Activated T-helper 2 cell treated with anti-CD3 and anti-CD28 coated beads, Interferon-gamma antibody, Interleukin-2, Interleukin-4, amounts not matched to agents 10 μg/mL and 5 μg/mL and 100 μg/mL, durations not matched to agents 14 hours and 24 hours and 36 hours (primary cell): ENCODE measurements at regions of chr1 and their contacts with region 1.

Region 1: DNA sequence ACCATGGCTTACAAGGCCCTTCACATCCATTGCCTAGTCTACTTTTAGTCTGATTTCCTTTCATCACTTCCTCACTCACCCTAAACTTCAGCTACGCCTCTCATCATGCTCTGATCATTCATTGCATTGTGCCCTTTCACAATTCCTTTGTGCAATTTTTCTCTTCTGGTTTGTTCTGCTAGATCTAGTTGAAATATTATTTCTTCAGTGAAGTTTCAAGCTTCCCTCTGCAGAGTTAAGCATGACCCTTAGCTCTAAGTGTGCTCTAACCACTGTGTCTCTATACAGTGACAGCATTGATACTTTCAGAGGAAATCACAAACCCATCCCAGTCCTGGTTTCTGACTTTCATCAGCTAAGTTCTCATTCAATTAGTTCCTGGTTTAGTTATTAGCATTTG is 166.1 kb downstream of the PLA2G4A start:
- DNase-seq: no peak
- H3K4me3 Mint-ChIP-seq: no peak overlapping the region
- H3K27ac Mint-ChIP-seq: no peak overlapping the region
- H3K4me1 Mint-ChIP-seq: no peaks in the 10 kb centered on the region
- H3K27me3 Mint-ChIP-seq: peaks cover under 1% of the 10 kb centered on the region

Region 2: DNA sequence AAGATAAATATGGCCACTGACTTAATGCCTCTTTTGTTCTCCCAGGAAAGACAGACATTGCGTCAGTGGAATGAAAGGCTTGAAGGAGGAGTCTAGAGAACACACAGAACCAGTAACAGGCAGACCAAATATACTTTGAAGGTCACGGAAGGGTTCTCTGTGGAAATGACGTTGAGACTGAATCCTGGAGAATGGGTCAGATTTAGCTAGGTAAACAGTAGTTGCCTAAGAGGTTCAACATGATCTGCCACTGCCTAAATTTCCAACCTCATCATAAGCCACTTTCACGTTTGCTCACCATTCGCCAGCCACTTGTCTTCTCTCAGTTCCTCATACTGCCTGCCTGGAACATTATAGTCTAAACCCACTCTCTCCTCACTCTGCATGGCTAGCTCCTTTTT is 145.6 kb before region 1 on chr1:
- intact Hi-C with region 1: no loop called
- DNase-seq: no peak
- H3K4me3 Mint-ChIP-seq: no peak overlapping the region
- H3K27ac Mint-ChIP-seq: peak overlapping the region; percentile 4
- H3K4me1 Mint-ChIP-seq: peaks cover 18% of the 10 kb centered on the region
- H3K27me3 Mint-ChIP-seq: peaks cover 3% of the 10 kb centered on the region

Region 3: DNA sequence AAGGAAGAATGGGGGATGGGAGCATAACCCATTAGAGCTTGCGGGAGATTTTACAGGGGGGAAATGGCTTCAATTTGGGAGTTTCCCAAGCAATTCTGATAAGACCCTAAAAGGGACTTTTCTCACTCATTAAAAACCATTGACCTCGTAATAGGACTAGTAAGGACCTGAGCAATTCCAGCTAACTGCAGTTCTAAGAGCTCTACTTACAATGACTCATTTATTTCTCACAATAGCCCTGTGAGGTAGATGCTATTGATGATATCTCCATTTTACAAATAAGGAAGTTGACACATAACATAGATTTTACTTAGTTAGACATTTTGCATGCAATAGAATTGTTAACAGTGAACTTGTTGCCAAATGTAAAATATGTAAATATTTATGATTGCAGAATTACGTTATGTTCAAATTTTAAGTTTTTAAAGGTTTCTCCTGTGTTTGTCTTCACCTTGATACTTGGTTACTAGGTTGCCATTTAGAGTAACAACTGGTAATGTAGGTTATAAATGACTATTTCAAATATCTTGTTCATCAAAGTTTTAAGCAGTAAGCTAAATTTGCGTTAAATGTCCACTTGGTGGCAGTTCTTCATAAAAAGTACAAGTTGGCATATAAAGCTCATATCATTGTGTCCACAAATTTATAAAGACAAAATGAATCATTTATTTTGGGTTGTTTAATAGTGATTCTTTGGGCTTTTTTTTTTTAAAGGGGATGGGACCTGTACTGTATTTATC is 15.8 kb after region 1 on chr1:
- intact Hi-C with region 1: loop called (anchors 2 kb)
- DNase-seq: no peak
- H3K4me3 Mint-ChIP-seq: no peak overlapping the region
- H3K27ac Mint-ChIP-seq: peak overlapping the region; percentile 25
- H3K4me1 Mint-ChIP-seq: peaks cover 6% of the 10 kb centered on the region
- H3K27me3 Mint-ChIP-seq: no peaks in the 10 kb centered on the region